ENCODE measurements at regions of chr2 and their contacts with region 1.

Region 1: DNA sequence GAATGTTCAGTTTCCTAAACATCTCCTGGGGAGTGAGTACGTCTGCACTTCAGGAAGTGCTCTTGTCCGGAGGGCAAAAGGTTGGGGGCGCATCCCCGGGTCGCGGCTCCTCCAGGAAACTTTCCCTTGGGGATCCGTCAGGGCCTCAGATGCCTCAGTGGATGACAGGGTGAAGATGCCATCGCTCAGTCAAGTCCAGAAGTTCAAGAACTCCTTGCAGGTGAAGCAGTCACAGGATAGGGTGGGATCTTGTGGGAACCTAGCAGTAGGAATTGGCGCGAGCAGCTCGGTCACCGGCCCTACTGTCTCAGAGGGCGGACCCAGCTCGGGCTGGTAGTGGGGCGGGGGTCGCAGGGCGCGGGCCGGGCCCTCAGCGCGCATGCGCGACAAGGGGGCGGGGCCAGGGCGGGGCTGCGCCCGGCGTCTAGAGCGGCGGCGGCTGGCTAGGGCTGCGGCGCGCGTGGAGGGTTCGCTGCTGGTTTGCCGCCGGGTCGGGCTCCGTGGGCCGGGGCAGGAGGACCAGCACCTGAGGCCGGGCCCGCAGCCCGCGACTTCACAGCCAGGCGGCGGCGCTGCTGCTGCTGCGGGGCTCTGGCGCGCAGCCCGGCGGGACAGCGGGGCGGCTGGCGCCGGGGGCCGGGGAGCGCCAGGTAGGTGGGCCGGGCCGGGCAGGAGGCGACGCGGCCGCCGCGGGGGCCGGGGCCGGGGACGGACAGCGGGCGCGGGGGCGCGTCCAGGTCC is at the start of gene INPP4A:
- DNase-seq: peak; percentile 73 to 89
- ATAC-seq: peak; percentile 65 to 87 (median 80)
- H3K4me3 ChIP-seq: peak within 1 kb of the TSS; percentile 64
- H3K4me3 Mint-ChIP-seq: peak within 1 kb of the TSS; percentile 98
- H3K27ac ChIP-seq: peak within 1 kb of the TSS; percentile 78
- H3K27ac Mint-ChIP-seq: peak within 1 kb of the TSS; percentile 98 to 99
- H3K4me1 ChIP-seq: peaks cover 38% of the 10 kb centered on the region
- H3K4me1 Mint-ChIP-seq: peaks cover 47 to 51% of the 10 kb centered on the region in 2 donors
- H3K27me3 ChIP-seq: no peaks in the 10 kb centered on the region
- H3K27me3 Mint-ChIP-seq: no peaks in the 10 kb centered on the region
- CTCF ChIP-seq: no peak
- total RNA-seq, gene INPP4A: 192 to 243 (median 225) TPM

Region 2: DNA sequence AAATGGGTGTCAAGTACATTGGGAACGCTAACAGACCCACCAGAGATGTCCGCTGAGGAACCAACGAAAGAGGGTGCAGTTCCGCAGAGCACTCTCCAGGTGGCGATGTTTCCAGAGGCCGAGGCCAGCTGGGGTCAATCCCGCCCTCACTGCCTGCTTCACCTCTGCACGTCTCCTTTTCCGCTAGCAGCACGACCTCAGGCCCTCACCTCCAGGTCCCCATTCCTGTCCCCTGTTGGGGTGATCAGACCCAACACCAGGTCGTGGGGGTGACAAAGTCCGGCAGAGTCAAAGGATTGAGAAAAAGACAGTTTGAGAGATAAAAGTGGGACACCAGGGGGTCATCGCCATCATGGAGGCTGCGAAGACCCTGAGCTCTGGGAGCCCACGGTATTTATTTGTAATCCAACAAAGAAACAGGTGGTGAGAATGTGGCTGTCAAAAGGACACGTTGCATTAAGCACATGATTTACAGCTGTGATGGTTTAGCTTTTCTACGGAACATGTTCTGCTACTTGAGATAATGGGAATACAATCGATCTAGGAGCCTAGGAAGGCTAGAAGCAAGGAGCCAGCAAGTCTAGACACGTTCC is 703.9 kb before region 1 on chr2:
- intact Hi-C with region 1: loop called (anchors 5 kb)
- DNase-seq: peak; percentile 50 to 71
- ATAC-seq: peak; percentile 49 to 63 (median 55)
- H3K4me3 ChIP-seq: no peak overlapping the region
- H3K4me3 Mint-ChIP-seq: peak overlapping the region; percentile 65
- H3K27ac ChIP-seq: peak overlapping the region; percentile 86
- H3K27ac Mint-ChIP-seq: peak overlapping the region; percentile 80 to 94
- H3K4me1 ChIP-seq: peaks cover 77% of the 10 kb centered on the region
- H3K4me1 Mint-ChIP-seq: peaks cover 74 to 82% of the 10 kb centered on the region in 2 donors
- H3K27me3 ChIP-seq: no peaks in the 10 kb centered on the region
- H3K27me3 Mint-ChIP-seq: no peaks in the 10 kb centered on the region
- CTCF ChIP-seq: peak; percentile 83

Region 3: DNA sequence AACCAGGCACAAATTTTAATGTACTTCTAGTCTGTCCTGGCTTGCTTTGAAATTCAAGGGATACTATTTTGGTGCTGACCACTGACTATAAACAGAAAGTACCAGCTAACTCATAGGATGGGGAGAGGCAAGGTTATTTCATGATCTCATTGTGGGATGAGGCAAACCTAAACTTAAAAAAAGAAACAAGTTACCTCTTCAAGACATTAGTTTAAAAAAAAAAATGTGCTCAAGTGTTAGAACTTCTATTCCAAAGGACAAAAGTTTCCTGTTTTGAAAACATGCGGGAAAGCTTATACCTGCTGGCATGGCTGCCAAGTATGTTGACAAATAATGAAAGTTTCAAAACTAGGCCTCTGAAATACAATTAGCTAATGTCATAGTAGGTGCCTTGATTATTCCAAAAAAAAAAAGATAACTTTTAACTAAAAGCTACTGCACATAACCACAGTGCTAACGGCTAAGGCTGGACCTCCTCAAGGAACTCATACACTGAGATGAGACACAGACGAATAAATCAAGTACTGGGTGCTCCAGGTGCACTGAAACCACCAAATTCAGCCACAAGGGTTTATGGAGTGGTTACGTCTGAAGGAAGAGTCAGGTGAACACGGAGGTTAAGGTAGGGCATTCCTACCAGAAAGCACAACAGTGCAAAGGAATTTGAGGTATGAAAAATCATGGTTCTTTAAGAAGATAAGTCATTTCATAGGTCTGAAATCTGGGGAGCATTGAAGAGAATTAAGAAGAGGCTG is 487.0 kb before region 1 on chr2:
- intact Hi-C with region 1: no loop called
- DNase-seq: peak in 1 of 2 donors; percentile 15
- ATAC-seq: no peak
- H3K4me3 ChIP-seq: no peak overlapping the region
- H3K4me3 Mint-ChIP-seq: no peak overlapping the region
- H3K27ac ChIP-seq: no peak overlapping the region
- H3K27ac Mint-ChIP-seq: peak overlapping the region in 1 of 2 donors; percentile 16
- H3K4me1 ChIP-seq: peaks cover 3% of the 10 kb centered on the region
- H3K4me1 Mint-ChIP-seq: peaks cover 67 to 71% of the 10 kb centered on the region in 2 donors
- H3K27me3 ChIP-seq: no peaks in the 10 kb centered on the region
- H3K27me3 Mint-ChIP-seq: no peaks in the 10 kb centered on the region
- CTCF ChIP-seq: no peak

Region 4: GRCh38 chr2:98412751-98413458 is 31.7 kb before region 1 on chr2:
- intact Hi-C with region 1: loop called (anchors 2 kb)
- DNase-seq: peak; percentile 35 to 90
- ATAC-seq: peak; percentile 89 to 98 (median 96)
- H3K4me3 ChIP-seq: no peak overlapping the region
- H3K4me3 Mint-ChIP-seq: no peak overlapping the region
- H3K27ac ChIP-seq: no peak overlapping the region
- H3K27ac Mint-ChIP-seq: no peak overlapping the region
- H3K4me1 ChIP-seq: no peaks in the 10 kb centered on the region
- H3K4me1 Mint-ChIP-seq: peaks cover 0 to 5% of the 10 kb centered on the region in 2 donors
- H3K27me3 ChIP-seq: no peaks in the 10 kb centered on the region
- H3K27me3 Mint-ChIP-seq: peaks cover 0 to 3% of the 10 kb centered on the region in 2 donors
- CTCF ChIP-seq: peak; percentile 81

Region 5: GRCh38 chr2:98455494-98455976 is 10.9 kb after region 1 on chr2:
- intact Hi-C with region 1: loop called (anchors 1 kb)
- DNase-seq: peak in 1 of 2 donors; percentile 78
- ATAC-seq: peak; percentile 52 to 74 (median 60)
- H3K4me3 ChIP-seq: no peak overlapping the region
- H3K4me3 Mint-ChIP-seq: peak overlapping the region; percentile 77
- H3K27ac ChIP-seq: peak overlapping the region; percentile 94
- H3K27ac Mint-ChIP-seq: peak overlapping the region; percentile 98 to 99
- H3K4me1 ChIP-seq: peaks cover 96% of the 10 kb centered on the region
- H3K4me1 Mint-ChIP-seq: peaks cover 92 to 93% of the 10 kb centered on the region in 2 donors
- H3K27me3 ChIP-seq: no peaks in the 10 kb centered on the region
- H3K27me3 Mint-ChIP-seq: no peaks in the 10 kb centered on the region
- CTCF ChIP-seq: no peak

Region 6: DNA sequence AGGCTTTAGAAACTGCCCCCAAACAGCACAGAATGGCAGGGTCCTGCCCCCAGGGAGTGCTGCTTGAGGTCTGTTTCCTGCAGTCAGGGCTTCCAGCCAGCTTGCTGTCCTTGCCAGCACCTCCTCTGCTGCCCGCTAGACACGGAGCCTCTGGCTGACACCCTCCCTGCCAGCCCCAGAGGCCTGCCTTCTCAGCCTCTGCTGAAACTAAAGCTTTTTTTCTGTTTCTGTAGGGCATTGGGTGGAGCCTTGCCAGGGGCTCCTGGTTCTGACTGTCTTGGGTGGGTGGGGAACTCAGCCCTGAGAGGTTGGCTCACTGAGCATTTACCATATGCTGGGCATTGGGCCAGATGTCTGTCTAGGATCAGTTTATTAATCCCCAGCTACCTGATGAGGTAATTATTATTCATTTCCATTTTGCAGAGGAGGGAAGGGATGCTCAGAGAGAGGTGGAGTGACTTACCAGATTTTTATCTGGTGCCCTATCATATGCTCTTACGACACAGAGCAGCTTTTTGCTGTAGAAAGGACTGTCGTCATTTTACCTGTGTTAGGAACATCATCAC is 35.4 kb after region 1 on chr2:
- intact Hi-C with region 1: loop called (anchors 5 kb)
- DNase-seq: peak in 1 of 2 donors; percentile 57
- ATAC-seq: peak; percentile 73 to 79 (median 73)
- H3K4me3 ChIP-seq: no peak overlapping the region
- H3K4me3 Mint-ChIP-seq: peak overlapping the region; percentile 82
- H3K27ac ChIP-seq: peak overlapping the region; percentile 52
- H3K27ac Mint-ChIP-seq: peak overlapping the region; percentile 98 to 99
- H3K4me1 ChIP-seq: peaks cover 92% of the 10 kb centered on the region
- H3K4me1 Mint-ChIP-seq: peaks cover 95 to 99% of the 10 kb centered on the region in 2 donors
- H3K27me3 ChIP-seq: no peaks in the 10 kb centered on the region
- H3K27me3 Mint-ChIP-seq: no peaks in the 10 kb centered on the region
- CTCF ChIP-seq: no peak

Region 7: GRCh38 chr2:98508709-98509066 is 64.1 kb after region 1 on chr2:
- intact Hi-C with region 1: loop called (anchors 5 kb)
- DNase-seq: peak; percentile 36 to 72
- ATAC-seq: peak; percentile 62 to 77 (median 73)
- H3K4me3 ChIP-seq: no peak overlapping the region
- H3K4me3 Mint-ChIP-seq: peak overlapping the region; percentile 53
- H3K27ac ChIP-seq: peak overlapping the region; percentile 55
- H3K27ac Mint-ChIP-seq: peak overlapping the region; percentile 85 to 91
- H3K4me1 ChIP-seq: peaks cover 96% of the 10 kb centered on the region
- H3K4me1 Mint-ChIP-seq: peaks cover 94 to 97% of the 10 kb centered on the region in 2 donors
- H3K27me3 ChIP-seq: no peaks in the 10 kb centered on the region
- H3K27me3 Mint-ChIP-seq: no peaks in the 10 kb centered on the region
- CTCF ChIP-seq: no peak

Region 8: DNA sequence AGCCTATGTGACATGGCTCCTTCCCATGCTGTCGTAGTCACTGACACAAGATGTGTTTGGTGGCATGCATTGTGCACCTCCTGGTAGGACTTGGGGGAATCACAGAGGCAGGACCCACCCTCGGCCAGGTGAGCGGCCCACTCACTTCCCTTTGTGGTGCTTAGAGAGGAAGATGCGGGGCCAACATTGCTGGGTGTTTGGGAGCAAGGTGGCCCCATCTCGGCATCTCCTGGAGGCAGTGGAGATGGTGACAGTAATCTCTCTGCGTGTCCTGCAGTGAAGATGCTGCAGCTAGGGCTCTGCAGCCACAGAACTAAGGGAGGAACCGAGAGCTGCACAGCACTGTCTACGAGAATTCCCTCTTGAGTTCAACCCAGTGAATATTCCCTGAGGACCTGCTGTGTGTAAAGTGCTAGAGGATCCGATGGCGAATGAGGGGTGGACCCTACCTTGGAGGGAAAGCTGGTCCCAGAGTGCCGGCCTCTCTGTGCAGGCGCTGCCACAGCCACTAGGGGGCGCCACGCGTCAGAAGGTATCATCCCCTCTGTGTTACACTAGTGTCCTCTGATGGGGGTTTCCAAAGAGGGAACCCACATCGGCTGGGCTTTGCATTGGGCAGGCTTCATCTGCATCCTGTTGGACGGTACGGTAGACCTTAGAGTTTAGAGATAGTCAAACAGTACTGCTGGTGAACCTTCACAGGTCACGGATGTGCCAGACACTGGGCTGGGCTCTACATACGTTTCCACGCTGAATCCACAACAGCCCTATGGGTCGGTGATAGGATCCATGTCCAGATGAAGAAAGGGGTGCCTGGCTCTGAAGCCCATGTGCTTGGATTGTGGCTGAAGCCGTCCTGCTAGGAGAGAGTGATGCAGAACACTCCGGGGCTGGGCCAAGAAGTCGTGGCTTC is 124.5 kb after region 1 on chr2:
- intact Hi-C with region 1: no loop called
- DNase-seq: peak; percentile 70 to 79
- ATAC-seq: peak; percentile 72 to 97 (median 93)
- H3K4me3 ChIP-seq: no peak overlapping the region
- H3K4me3 Mint-ChIP-seq: no peak overlapping the region
- H3K27ac ChIP-seq: no peak overlapping the region
- H3K27ac Mint-ChIP-seq: peak overlapping the region; percentile 84 to 86
- H3K4me1 ChIP-seq: no peaks in the 10 kb centered on the region
- H3K4me1 Mint-ChIP-seq: peaks cover 5 to 25% of the 10 kb centered on the region in 2 donors
- H3K27me3 ChIP-seq: no peaks in the 10 kb centered on the region
- H3K27me3 Mint-ChIP-seq: no peaks in the 10 kb centered on the region
- CTCF ChIP-seq: peak; percentile 97

Region 9: DNA sequence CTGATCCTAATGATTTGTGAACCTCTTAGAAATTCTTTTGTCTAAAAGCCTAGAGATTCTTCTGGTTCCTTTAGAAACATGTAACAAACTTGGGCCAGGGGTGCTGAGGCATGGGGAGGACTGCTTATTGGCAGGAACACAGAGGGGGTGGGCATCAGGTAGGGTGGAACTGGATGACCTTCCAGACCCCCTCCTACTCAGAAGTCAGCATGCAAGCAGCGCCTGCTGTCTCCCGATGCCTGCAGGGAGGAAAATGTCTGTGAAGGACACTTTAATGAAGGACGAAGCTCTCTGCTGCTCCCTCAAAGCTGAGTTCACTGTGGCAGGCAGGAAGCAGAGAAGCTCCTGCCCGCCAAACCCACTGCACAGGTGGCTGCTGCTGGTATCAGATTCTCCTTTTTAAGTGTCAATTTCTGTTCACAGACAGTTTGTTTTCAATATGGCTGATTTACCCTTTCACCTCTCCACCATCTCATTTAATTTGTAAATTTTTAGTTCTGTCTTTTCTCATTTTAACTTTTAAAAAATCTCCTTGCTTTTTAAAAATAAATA is 144.3 kb after region 1 on chr2:
- intact Hi-C with region 1: no loop called
- DNase-seq: no peak
- ATAC-seq: no peak
- H3K4me3 ChIP-seq: no peak overlapping the region
- H3K4me3 Mint-ChIP-seq: no peak overlapping the region
- H3K27ac ChIP-seq: no peak overlapping the region
- H3K27ac Mint-ChIP-seq: peak overlapping the region; percentile 66 to 77
- H3K4me1 ChIP-seq: no peaks in the 10 kb centered on the region
- H3K4me1 Mint-ChIP-seq: peaks cover 19 to 21% of the 10 kb centered on the region in 2 donors
- H3K27me3 ChIP-seq: no peaks in the 10 kb centered on the region
- H3K27me3 Mint-ChIP-seq: no peaks in the 10 kb centered on the region
- CTCF ChIP-seq: no peak

Measured in natural killer cell (primary cell).